ENCODE measurements at regions of chr12 and their contacts with region 1.

Region 1: DNA sequence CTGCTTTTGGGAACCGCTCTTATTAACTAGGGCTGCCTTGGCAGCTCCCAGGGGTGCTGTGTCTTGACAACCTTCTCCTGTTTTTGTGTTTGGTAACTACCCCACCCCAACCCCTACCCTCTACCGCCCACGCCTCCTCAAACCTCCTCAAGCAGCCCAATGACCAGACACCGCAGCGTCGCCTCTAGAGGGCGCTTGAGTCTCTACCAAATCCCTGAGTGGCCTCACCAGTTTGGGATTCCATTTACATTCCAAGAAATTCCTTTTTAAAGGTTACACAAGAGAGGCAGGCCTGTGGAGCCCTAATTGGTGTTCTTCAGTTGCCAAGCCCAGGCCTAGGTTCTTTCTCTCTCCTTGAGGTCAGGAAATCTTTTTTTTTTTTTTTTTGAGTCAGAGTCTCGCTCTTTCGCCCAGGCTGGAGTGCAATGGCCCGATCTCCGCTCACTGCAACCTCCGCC is 72.3 kb upstream of the USP44 start:
- DNase-seq: peak; percentile 72
- H3K4me3 ChIP-seq: no peak overlapping the region
- H3K27ac ChIP-seq: peak overlapping the region in 1 of 4 donors; percentile 28
- H3K4me1 ChIP-seq: peaks cover 0 to 12% (median 5%) of the 10 kb centered on the region in 4 donors
- H3K27me3 ChIP-seq: no peaks in the 10 kb centered on the region
- CTCF ChIP-seq: peak; percentile 58 to 81 (median 67)
- EP300 ChIP-seq: no peak
- POLR2A ChIP-seq: no peak

Region 2: GRCh38 chr12:95480230-95480629 is 143.4 kb before region 1 on chr12:
- in situ Hi-C with region 1: no loop called
- intact Hi-C with region 1: no loop called
- DNase-seq: no peak
- H3K4me3 ChIP-seq: no peak overlapping the region
- H3K27ac ChIP-seq: no peak overlapping the region
- H3K4me1 ChIP-seq: peaks cover 11 to 24% (median 15%) of the 10 kb centered on the region in 4 donors
- H3K27me3 ChIP-seq: no peaks in the 10 kb centered on the region
- CTCF ChIP-seq: no peak
- EP300 ChIP-seq: no peak
- POLR2A ChIP-seq: no peak

Region 3: DNA sequence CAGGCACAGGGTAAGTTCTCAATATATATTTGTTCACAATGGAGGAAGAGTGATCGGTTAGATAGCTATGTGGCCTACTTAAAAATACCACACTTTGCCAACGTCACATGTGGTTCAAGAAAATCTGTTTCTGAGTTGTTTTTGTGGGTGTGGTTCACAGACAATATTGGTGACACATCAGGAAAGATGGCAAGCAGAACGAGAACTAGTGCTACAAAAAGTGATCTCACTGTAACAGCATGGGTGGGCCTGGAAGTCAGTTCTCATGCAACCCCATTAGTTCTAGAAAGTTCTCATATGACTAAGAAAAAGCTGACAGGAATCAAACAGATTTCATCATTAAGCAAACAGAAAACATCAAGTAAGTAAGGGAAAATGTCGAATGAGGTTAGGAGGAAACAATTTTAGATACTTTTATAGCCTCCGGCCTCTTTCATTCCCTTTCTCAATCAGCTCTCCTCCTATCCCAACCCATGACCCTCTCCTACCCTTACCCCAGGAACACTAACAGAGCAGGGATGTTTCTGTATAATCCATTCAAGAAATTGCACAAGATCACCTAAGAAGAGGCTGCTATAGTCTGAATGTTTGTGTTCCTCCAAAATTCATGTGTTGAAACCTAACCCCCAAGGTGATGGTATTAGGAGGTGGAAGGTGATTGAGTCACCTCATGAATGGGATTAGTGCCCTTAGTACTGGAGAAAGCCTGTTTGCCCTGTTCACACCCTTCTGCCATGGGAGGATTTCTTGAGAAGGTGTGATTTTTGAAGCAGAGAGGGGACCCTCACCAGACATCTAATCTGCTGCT is 182.5 kb after region 1 on chr12:
- in situ Hi-C with region 1: loop called in 2 of 4 experiments (anchors 10 kb)
- intact Hi-C with region 1: no loop called
- DNase-seq: no peak
- H3K4me3 ChIP-seq: no peak overlapping the region
- H3K27ac ChIP-seq: peak overlapping the region; percentile 21 to 53 (median 42)
- H3K4me1 ChIP-seq: peaks cover 8 to 42% (median 24%) of the 10 kb centered on the region in 4 donors
- H3K27me3 ChIP-seq: no peaks in the 10 kb centered on the region
- CTCF ChIP-seq: no peak
- EP300 ChIP-seq: no peak
- POLR2A ChIP-seq: no peak